ENCODE measurements at regions of chr2 and their contacts with region 1.

Region 1: GRCh38 chr2:127563458-127564428 is 28.3 kb downstream of the MYO7B start:
- DNase-seq: no peak
- ATAC-seq: no peak
- H3K4me3 ChIP-seq: no peak overlapping the region
- H3K27ac ChIP-seq: no peak overlapping the region
- H3K4me1 ChIP-seq: peaks cover 0 to 8% of the 10 kb centered on the region in 2 donors
- H3K27me3 ChIP-seq: no peaks in the 10 kb centered on the region

Region 2: DNA sequence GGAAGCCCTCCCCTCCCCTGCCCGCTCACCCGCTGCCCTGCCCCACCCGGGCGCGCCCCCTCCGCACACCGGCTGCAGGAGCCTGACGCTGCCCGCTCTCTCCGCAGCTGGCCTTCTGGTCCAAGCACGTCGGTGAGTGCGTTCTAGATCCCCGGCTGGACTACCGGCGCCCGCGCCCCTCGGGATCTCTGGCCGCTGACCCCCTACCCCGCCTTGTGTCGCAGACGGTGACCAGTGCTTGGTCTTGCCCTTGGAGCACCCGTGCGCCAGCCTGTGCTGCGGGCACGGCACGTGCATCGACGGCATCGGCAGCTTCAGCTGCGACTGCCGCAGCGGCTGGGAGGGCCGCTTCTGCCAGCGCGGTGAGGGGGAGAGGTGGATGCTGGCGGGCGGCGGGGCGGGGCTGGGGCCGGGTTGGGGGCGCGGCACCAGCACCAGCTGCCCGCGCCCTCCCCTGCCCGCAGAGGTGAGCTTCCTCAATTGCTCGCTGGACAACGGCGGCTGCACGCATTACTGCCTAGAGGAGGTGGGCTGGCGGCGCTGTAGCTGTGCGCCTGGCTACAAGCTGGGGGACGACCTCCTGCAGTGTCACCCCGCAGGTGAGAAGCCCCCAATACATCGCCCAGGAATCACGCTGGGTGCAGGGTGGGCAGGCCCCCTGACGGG is 140.8 kb before region 1 on chr2:
- intact Hi-C with region 1: loop called in 1 of 2 experiments (anchors 10 kb)
- DNase-seq: no peak
- ATAC-seq: peak; percentile 26
- H3K4me3 ChIP-seq: no peak overlapping the region
- H3K27ac ChIP-seq: no peak overlapping the region
- H3K4me1 ChIP-seq: no peaks in the 10 kb centered on the region
- H3K27me3 ChIP-seq: no peaks in the 10 kb centered on the region

Measured in aorta (tissue), 5 donors.